IMR-90 (cell line): ENCODE measurements at regions of chr14 and their contacts with region 1.

Region 1: DNA sequence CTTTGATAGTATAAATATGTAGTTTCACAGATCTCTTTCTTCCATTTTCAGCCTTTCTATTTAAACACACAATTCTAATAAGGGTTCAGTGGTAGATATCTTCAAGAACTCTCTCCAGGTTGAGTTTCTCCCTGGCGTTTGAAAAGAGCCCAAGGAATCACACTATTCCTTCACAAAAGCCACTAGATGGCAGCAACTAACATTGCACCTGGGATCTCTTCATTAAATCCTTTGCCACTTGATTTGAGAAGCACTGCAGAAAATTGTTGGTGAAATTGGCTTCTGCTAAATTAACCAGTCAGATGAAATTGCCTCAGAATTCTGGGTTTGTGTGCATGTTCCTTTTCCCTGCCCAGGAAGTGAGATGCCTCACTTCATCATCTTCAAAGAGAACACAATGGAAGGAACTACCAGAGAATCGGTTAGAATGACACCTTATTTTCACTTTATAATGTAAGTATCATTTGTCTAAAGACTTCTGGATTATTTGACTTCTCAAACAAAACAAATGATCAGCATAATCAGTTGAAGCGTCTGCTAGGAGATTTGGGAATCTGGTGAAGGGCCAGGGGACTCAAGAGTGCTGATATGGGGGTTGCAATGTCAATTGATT is 6.8 kb downstream of the CCDC198 start:
- DNase-seq: peak; percentile 41
- ATAC-seq: peak; percentile 37; the same call in 1 of the 2 replicates
- H3K4me3 ChIP-seq: no peak overlapping the region
- H3K27ac ChIP-seq: no peak overlapping the region
- H3K4me1 ChIP-seq: no peaks in the 10 kb centered on the region
- H3K27me3 ChIP-seq: peaks cover 2% of the 10 kb centered on the region; the same call in 1 of the 2 replicates
- CTCF ChIP-seq: peak; percentile 60
- POLR2A ChIP-seq: no peak
- RAD21 ChIP-seq: peak; percentile 57

Region 2: DNA sequence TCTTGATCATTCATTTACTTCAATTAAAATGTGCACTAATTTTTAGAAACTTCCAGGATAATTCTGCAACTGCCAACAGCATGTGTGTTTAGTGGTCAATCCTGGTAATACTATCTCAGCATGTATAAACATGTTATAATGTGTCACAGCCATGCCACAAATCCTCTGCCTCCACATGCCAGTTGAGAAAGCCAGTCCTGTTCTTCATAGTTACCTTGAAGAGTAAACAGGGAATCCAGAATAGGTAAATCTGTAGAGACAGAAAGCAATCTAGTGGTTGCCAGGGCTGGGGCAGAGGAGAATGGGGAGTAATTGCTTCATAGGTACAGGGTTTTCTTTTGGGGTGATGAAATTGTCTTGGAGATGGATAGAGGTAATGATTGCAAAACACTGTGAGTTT is 579.2 kb after region 1 on chr14:
- CTCF ChIA-PET with region 1: interaction called, 4 read pairs
- POLR2A ChIA-PET with region 1: no interaction called
- dilution Hi-C with region 1: no loop called
- in situ Hi-C with region 1: loop called (anchors 5 kb)
- intact Hi-C with region 1: no loop called
- DNase-seq: no peak
- ATAC-seq: no peak
- H3K4me3 ChIP-seq: no peak overlapping the region
- H3K27ac ChIP-seq: no peak overlapping the region
- H3K4me1 ChIP-seq: no peaks in the 10 kb centered on the region
- H3K27me3 ChIP-seq: peaks cover 5% of the 10 kb centered on the region
- CTCF ChIP-seq: no peak
- POLR2A ChIP-seq: no peak
- RAD21 ChIP-seq: no peak